Activated CD4-positive, alpha-beta T cell treated with anti-CD3 and anti-CD28 coated beads, Interleukin-2, amount 10 ng/mL, durations not matched to agents 7 days and 5 days (primary cell): ENCODE measurements at regions of chr3 and their contacts with region 1.

Region 1: DNA sequence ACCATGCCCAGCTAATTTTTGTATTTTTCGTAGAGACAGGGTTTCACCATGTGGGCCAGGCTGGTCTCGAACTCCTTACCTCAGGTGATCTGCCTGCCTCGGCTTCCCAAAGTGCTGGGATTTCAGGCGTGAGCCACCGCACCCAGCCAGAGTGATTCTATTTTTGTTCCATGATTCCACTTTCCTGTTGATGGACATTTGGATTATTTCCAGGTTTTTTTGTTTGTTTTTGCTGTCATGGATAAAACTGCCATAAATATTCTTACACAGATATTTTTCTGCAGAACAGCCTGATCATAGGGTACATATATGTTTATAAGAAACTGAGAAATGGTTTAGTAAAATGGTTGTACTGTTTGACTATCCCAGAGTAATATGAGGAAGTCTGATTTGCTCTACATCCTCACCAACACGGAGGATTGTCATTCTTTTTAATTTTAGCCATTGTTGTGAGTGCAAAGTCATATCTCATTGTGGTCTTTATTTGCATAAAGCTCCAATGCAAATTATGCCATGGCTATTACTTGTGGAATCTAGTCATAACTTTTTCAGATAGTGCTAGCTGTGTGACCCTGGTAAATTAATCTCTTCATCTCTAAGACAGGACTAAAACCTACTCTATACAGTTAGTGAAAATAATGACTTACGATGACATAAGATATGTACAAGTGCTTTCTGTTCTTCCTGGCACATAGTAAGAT is 42.7 kb downstream of the MAP6D1 start:
- DNase-seq: no peak
- H3K4me3 Mint-ChIP-seq: no peak overlapping the region
- H3K27ac Mint-ChIP-seq: no peak overlapping the region
- H3K4me1 Mint-ChIP-seq: no peaks in the 10 kb centered on the region
- H3K27me3 Mint-ChIP-seq: no peaks in the 10 kb centered on the region

Region 2: DNA sequence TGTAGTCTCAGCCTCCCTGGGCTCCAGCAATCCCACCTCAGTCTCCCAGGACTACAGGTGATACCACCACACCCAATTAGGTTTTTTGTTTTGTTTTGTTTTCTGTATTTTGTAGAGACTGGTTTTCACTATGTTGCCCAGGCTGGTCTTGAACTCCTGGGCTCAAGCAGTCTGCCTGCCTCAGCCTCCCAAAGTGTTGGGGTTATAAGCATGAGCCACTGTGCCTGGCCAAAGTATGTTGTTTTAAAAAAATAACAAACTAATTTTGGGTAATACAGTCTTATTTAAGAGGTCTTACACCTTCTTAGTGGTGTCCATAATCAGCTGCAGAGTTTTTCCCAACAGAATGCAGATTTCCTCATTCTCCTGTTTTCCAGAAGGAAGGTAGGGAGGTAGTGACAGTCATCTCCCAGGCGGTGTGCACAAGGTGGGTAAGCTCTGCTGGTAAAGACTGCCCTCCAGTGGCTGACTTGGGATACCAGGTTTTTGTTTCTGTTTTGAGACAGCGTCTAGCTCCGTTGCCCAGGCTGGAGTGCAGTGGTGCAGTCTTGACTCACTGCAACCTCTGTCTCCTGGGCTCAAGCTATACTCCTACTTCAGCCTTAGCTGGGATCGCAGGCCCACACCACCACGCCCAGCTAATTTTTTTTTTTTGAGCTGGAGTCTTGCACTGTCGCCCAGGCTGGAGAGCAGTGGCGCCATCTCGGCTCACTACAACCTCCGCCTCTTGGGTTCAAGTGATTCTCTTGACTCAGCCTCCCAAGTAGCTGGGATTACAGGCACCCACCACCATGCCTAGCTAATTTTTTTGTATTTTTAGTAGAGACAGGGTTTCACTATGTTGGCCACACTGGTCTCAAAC is 15.8 kb before region 1 on chr3:
- CTCF ChIA-PET with region 1: interaction called, 10 read pairs
- POLR2A ChIA-PET with region 1: no interaction called
- DNase-seq: peak; percentile 83
- H3K4me3 Mint-ChIP-seq: no peak overlapping the region
- H3K27ac Mint-ChIP-seq: peak overlapping the region; percentile 34
- H3K4me1 Mint-ChIP-seq: peaks cover 25% of the 10 kb centered on the region
- H3K27me3 Mint-ChIP-seq: no peaks in the 10 kb centered on the region